Heart left ventricle (tissue), 16 donors: ENCODE measurements at regions of chr16 and their contacts with region 1.

Region 1: DNA sequence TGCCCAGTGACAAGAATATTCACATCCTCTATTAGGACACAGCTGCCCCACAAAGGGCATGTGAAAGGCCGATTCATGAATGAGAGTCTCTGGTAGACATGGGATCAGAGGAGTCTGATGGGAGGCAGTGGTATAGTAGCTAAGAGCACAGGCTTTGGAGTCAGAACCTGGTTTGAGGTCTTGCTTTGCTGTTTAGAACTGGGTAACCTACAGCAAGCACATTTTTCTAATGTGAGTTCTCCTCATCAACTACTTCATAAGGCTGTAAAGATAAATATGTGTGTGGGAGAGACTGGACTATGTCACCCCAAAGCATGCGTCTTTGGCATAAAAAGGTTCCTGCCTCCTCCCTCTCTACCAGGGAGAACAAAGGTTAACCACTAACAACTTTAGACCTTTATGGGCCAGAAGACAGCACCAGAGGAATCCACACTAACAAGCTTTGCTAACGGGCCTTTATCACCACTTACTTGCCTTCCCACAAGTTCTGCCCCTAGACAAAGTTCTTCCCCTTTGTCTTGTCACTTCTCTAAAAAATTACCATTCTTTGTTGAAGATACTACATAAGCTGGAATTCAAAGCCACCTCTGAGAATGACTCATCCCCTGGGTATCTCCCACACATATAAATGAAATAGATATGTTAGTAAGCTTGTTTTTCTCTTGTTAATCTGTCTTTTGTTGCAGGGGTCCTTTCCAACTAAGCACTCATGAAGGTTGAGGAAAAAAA is 21.1 kb downstream of the CDR2 start:
- DNase-seq: no peak
- ATAC-seq: peak in 3 of 4 donors; percentile 27 to 56 (median 32)
- H3K4me3 ChIP-seq: no peak overlapping the region
- H3K27ac ChIP-seq: peak overlapping the region in 2 of 12 donors; percentile 45 to 69
- H3K4me1 ChIP-seq: peaks cover 0 to 58% (median 5%) of the 10 kb centered on the region in 12 donors
- H3K27me3 ChIP-seq: no peaks in the 10 kb centered on the region
- CTCF ChIP-seq: no peak
- POLR2A ChIP-seq: no peak

Region 2: GRCh38 chr16:22312897-22313781 is 40.2 kb before region 1 on chr16:
- intact Hi-C with region 1: no loop called
- DNase-seq: no peak
- ATAC-seq: no peak
- H3K4me3 ChIP-seq: no peak overlapping the region
- H3K27ac ChIP-seq: no peak overlapping the region
- H3K4me1 ChIP-seq: peaks cover 0 to 2% (median 0%) of the 10 kb centered on the region in 12 donors
- H3K27me3 ChIP-seq: no peaks in the 10 kb centered on the region
- CTCF ChIP-seq: no peak
- POLR2A ChIP-seq: no peak

Region 3: DNA sequence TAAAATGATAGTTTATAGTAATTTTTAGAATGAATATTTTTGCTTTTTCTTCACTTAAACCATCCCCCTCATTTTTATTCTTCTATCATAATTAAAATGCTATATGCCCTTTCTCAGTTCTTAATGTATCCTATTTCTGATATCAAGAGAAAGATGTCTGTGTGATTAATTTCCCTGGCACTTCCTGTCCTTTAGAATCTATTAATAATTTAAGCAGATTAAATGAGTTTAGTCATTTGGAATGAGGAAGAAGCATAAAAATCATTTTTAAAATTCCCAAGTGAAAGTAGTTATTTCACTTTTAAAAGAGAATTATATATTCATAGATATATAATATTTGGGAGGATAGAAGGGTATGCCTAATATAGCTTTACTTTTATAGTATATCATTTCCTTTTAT is 48.8 kb after region 1 on chr16:
- intact Hi-C with region 1: loop called in 1 of 10 experiments (anchors 10 kb)
- DNase-seq: no peak
- ATAC-seq: no peak
- H3K4me3 ChIP-seq: no peak overlapping the region
- H3K27ac ChIP-seq: no peak overlapping the region
- H3K4me1 ChIP-seq: peaks cover 0 to 15% (median 0%) of the 10 kb centered on the region in 12 donors
- H3K27me3 ChIP-seq: no peaks in the 10 kb centered on the region
- CTCF ChIP-seq: no peak
- POLR2A ChIP-seq: no peak